Gastrocnemius medialis (tissue), 4 donors: ENCODE measurements at regions of chr4 and their contacts with region 1.

Region 1: DNA sequence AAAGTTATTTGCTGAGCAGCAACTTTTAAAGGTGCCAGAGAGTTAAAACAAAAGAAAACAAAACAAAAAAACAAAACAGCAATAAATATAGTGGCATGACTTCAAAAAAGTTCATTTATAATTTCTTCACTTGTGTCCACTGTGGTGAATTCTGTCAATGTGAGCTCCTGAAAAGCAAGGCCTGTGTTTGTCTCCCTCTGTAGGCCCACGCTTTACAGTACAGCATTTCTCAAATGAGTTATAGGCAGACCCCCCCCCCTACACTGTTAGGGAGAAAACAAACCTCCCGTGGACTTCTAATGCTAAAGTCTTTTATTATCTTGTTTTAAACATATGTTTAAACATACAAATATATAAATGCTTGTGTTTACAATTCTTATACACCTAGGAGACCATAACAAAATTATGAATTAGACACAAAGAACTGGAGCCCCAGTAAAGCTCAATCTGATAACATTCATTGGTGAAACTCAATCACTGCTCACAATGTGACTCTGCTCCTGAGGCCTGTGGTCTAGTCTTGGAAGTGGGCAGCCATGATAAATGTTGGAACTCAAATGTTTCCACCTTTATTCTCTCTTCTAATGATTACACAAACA is 47.0 kb upstream of the SCOC start:
- DNase-seq: no peak
- ATAC-seq: peak; percentile 63 to 68
- H3K4me3 ChIP-seq: no peak overlapping the region
- H3K27ac ChIP-seq: no peak overlapping the region
- H3K4me1 ChIP-seq: no peaks in the 10 kb centered on the region
- H3K27me3 ChIP-seq: no peaks in the 10 kb centered on the region
- CTCF ChIP-seq: peak in 4 of 5 experiments; percentile 41 to 61 (median 52)
- POLR2A ChIP-seq: no peak

Region 2: DNA sequence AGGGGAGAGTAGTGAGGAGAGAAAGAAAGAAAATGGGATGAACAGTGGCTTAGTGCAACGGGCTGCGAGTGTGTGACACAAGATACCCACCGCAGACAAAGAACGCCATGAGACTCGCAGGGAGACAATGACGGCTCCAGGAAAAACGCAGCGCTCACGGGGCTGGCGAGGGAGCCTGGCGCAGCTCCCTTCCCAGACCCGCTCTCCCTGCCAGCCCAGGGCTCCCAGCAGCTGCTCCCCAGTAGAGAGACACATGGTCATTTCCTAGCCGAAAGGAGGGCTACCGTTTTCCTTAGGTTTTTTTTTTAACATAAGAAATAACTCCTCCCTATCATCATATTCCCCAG is 322.0 kb before region 1 on chr4:
- in situ Hi-C with region 1: no loop called
- intact Hi-C with region 1: loop called (anchors 10 kb)
- DNase-seq: peak; percentile 46 to 66
- ATAC-seq: peak; percentile 81 to 90
- H3K4me3 ChIP-seq: peak overlapping the region; percentile 41 to 52 (median 51)
- H3K27ac ChIP-seq: peak overlapping the region in 3 of 4 donors; percentile 15 to 77 (median 60)
- H3K4me1 ChIP-seq: peaks cover 18 to 23% of the 10 kb centered on the region in 2 donors
- H3K27me3 ChIP-seq: no peaks in the 10 kb centered on the region
- CTCF ChIP-seq: no peak
- POLR2A ChIP-seq: no peak